A549 (cell line): ENCODE measurements at regions of chr13 and their contacts with region 1.

Region 1: GRCh38 chr13:97786510-97786909 is 167.0 kb upstream of the IPO5 start:
- DNase-seq: no peak
- ATAC-seq: no peak
- H3K4me3 ChIP-seq: no peak overlapping the region
- H3K27ac ChIP-seq: no peak overlapping the region
- H3K4me1 ChIP-seq: no peaks in the 10 kb centered on the region
- CTCF ChIP-seq: no peak
- EP300 ChIP-seq: no peak
- POLR2A ChIP-seq: no peak
- RAD21 ChIP-seq: no peak

Region 2: DNA sequence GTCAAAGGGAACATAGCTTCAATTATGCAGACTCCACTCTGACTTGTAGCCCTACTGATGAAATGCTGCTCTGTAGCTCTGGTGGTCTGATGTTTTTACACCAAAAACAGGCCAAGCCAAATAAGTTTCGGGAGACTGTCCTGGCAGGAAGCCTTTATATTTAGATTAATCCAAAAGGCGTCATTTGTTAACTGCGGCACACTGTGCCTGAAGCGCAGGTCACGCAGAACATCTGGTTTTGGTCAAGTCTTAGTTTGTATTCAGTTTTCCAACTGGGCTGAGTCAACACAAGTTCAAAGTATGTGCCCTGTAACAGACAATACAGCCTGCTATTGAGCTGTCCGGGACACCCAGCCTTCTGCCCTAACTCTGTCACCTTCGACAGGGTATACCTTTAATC is 12.3 kb after region 1 on chr13:
- CTCF ChIA-PET with region 1: interaction called, 10 read pairs
- POLR2A ChIA-PET with region 1: no interaction called
- DNase-seq: no peak
- ATAC-seq: no peak
- H3K4me3 ChIP-seq: no peak overlapping the region
- H3K27ac ChIP-seq: no peak overlapping the region
- H3K4me1 ChIP-seq: no peaks in the 10 kb centered on the region
- CTCF ChIP-seq: no peak
- EP300 ChIP-seq: no peak
- POLR2A ChIP-seq: no peak
- RAD21 ChIP-seq: no peak

Region 3: GRCh38 chr13:98022210-98022609 is 235.7 kb after region 1 on chr13:
- CTCF ChIA-PET with region 1: no interaction called
- POLR2A ChIA-PET with region 1: no interaction called
- DNase-seq: no peak
- ATAC-seq: peak in 1 of 2 experiments; percentile 52; a peak in 2 of 6 replicates
- H3K4me3 ChIP-seq: no peak overlapping the region
- H3K27ac ChIP-seq: no peak overlapping the region
- H3K4me1 ChIP-seq: peaks cover 7% of the 10 kb centered on the region; the same call in 1 of the 3 replicates
- CTCF ChIP-seq: no peak
- EP300 ChIP-seq: no peak
- POLR2A ChIP-seq: no peak
- RAD21 ChIP-seq: no peak